ENCODE measurements at regions of chr2 and their contacts with region 1.

Region 1: DNA sequence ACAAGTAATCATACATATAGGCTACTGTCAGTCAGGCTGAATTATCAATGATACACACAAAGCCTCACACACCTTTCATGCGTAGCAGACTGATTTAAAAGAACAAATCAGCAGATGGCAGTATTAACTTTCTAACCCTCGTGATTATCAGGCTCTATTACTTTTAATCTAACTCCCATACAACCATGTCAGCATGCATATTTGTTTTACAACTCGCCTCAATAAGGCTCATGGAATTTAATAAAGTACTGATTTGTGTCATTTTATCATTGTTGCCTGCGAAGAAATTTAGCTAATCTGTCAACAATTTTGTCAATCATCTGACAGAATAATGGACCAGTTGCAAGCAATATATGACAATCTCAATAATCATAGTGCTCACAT is 82.8 kb downstream of the SLC25A12 start:
- DNase-seq: no peak
- ATAC-seq: peak in 1 of 2 donors; percentile 45
- H3K4me3 ChIP-seq: no peak overlapping the region
- H3K27ac ChIP-seq: no peak overlapping the region
- H3K4me1 ChIP-seq: no peaks in the 10 kb centered on the region
- H3K27me3 ChIP-seq: no peaks in the 10 kb centered on the region
- CTCF ChIP-seq: peak; percentile 30

Region 2: GRCh38 chr2:172102391-172103278 is 291.4 kb after region 1 on chr2 and contains the start of gene DLX2:
- intact Hi-C with region 1: loop called (anchors 10 kb)
- DNase-seq: peak; percentile 85
- ATAC-seq: peak; percentile 67 to 76
- H3K4me3 ChIP-seq: peak within 1 kb of the TSS; percentile 59
- H3K27ac ChIP-seq: no peak within 1 kb of the TSS
- H3K4me1 ChIP-seq: peaks cover 73% of the 10 kb centered on the region
- H3K27me3 ChIP-seq: peaks cover 100% of the 10 kb centered on the region
- CTCF ChIP-seq: no peak
- total RNA-seq, gene DLX2: not detected